CD14-positive monocyte (primary cell): ENCODE measurements at regions of chr20 and their contacts with region 1.

Region 1: GRCh38 chr20:956330-956951 is 40.3 kb upstream of the ANGPT4 start:
- DNase-seq: peak; percentile 36 to 71 (median 58)
- H3K4me3 ChIP-seq: no peak overlapping the region
- H3K4me3 Mint-ChIP-seq: peak overlapping the region in 1 of 2 donors; percentile 42
- H3K27ac ChIP-seq: no peak overlapping the region
- H3K27ac Mint-ChIP-seq: no peak overlapping the region
- H3K4me1 ChIP-seq: peaks cover 0 to 2% of the 10 kb centered on the region in 2 donors
- H3K4me1 Mint-ChIP-seq: peaks cover 5% of the 10 kb centered on the region
- H3K27me3 ChIP-seq: peaks cover 0 to 8% of the 10 kb centered on the region in 2 donors
- H3K27me3 Mint-ChIP-seq: peaks cover 23 to 41% (median 39%) of the 10 kb centered on the region in 3 donors
- CTCF ChIP-seq: peak; percentile 99

Region 2: DNA sequence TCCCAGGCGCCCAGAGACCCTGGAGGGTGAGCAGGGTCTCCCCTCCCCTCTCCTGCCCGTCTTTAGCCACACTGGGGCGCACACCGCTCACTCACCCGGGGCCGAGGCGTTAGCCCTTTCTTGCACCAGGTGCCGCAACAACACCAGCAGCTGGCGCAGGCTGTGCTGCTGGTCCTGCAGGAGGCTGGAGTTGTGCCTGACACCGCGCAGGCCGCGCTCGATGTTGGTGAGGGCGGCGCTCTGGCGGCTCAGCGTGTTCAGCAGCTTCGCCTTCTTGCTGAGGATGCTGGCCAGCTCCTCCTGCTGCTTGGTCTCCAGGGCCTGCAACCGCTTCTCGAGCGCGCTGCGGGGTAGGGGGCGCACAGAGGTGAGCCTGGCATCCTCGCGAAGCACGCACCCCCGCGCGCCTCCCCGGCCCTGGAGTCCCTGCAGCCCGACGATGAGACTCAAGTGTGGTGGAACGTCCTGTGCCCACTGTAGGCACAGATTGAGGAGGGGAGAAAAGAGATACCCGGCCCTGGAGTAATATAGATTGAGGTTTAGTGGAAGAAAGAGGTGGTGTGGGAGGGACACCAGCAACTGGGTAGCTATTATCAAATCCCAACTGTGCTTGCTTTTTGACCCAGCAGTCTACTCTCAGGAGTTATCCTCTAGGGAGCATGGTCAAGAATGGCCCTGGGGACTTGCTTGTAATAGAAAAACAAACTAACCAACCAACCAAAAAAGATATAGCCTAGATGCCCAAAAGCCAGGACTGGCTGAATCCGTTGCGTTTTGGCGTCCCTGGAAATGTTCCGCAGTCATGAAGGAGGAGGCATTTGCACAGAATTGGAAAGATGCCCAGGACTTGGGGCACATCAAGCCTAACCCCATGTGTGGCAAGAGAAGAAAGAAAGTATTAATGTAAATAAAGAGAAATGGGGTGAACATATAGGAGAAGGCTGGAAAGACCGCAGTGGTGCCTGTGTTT is 71.2 kb before region 1 on chr20:
- intact Hi-C with region 1: loop called (anchors 10 kb)
- DNase-seq: peak; percentile 30 to 37 (median 36)
- H3K4me3 ChIP-seq: no peak overlapping the region
- H3K4me3 Mint-ChIP-seq: peak overlapping the region in 1 of 2 donors; percentile 67
- H3K27ac ChIP-seq: no peak overlapping the region
- H3K27ac Mint-ChIP-seq: no peak overlapping the region
- H3K4me1 ChIP-seq: peaks cover 44 to 59% of the 10 kb centered on the region in 2 donors
- H3K4me1 Mint-ChIP-seq: peaks cover 64% of the 10 kb centered on the region
- H3K27me3 ChIP-seq: peaks cover 0 to 32% of the 10 kb centered on the region in 2 donors
- H3K27me3 Mint-ChIP-seq: peaks cover 24 to 32% (median 28%) of the 10 kb centered on the region in 3 donors
- CTCF ChIP-seq: peak; percentile 25

Region 3: DNA sequence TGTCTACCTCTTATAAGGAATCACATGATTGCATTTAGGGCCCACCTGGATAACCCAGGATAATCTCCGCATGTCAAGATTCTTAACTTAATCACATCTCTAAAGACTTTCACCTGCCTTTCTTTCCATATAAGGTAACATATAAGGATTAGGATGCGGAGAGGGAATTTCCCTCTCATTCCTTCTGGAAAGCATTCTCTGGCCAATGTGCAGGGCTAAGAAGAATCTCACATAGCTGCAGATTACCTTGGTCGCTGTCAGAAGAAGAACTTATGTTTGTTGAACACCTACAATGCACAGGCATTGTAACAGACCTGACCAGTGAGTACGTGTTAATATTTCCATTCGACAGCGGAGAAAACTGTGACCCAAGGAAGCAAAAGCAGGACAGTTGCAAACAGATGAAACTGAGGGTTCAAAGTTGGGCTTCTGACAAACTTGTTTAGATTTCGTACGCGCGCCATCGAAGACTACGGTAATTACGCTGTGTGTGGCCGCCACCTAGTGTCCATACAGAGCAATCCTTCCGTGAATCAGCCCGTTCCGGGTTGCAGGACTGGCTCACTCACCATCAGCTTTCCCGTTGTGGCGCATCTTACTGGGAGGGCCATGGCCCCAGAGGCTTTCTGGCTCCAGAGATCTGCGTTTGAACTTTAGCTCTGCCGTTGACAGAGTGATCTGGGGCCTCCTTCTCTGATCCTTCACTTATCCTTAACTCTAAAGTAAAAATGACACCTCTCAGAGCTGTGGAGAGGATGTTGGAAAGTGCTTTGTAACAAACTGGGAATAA is 256.4 kb after region 1 on chr20:
- intact Hi-C with region 1: loop called in 1 of 2 experiments (anchors 5 kb)
- DNase-seq: peak; percentile 37 to 56 (median 56)
- H3K4me3 ChIP-seq: no peak overlapping the region
- H3K4me3 Mint-ChIP-seq: peak overlapping the region in 1 of 2 donors; percentile 66
- H3K27ac ChIP-seq: no peak overlapping the region
- H3K27ac Mint-ChIP-seq: no peak overlapping the region
- H3K4me1 ChIP-seq: no peaks in the 10 kb centered on the region
- H3K4me1 Mint-ChIP-seq: peaks cover 3% of the 10 kb centered on the region
- H3K27me3 ChIP-seq: peaks cover 0 to 5% of the 10 kb centered on the region in 2 donors
- H3K27me3 Mint-ChIP-seq: peaks cover 5 to 19% (median 8%) of the 10 kb centered on the region in 3 donors
- CTCF ChIP-seq: peak; percentile 89